AG04449 (cell line): ENCODE measurements at regions of chr15 and their contacts with region 1.

Region 1: DNA sequence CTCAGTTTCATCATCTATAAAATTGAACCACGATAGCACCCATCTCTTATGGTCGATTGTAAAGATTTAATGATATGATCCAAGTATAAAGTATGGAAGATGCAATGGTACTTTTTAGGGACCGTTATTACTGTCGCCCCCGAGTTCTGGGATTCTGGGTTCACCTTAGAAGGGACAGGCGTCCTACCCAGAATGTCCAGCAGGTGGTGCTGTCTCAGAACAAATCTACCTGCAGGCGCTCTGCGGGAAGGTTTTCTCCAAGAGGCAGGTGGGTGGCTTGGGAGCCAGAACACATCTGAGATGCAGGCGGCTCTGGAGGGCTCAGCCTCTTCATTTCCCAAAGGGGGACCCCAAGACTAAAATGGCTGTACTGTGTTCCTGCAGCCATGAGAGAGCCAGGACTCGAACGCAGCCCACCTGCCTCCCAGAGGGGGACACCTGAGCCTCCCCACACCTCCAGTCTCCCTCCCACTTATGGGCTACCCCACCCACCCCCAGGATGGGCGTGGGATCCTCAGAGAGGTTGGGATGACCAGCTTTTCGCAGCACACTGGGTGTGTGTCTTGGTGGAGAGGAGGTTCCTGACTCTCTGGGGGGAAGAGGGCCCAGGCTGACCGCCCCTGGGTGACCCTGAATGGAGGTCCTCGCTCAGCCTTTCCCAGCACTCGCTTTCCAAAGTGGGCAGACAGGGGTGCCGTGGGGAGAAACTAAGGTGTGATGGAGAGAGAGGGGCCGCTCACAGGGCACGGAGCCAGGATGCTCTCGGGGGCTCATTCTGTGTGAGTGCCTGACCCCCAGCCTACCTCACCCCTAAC is 28.1 kb upstream of the CORO2B start:
- DNase-seq: no peak
- H3K4me3 ChIP-seq: no peak overlapping the region
- CTCF ChIP-seq: peak; percentile 80

Region 2: GRCh38 chr15:68304589-68305337 is 245.9 kb before region 1 on chr15:
- CTCF ChIA-PET with region 1: interaction called, 68 read pairs
- POLR2A ChIA-PET with region 1: no interaction called
- DNase-seq: no peak
- H3K4me3 ChIP-seq: no peak overlapping the region
- CTCF ChIP-seq: no peak

Region 3: DNA sequence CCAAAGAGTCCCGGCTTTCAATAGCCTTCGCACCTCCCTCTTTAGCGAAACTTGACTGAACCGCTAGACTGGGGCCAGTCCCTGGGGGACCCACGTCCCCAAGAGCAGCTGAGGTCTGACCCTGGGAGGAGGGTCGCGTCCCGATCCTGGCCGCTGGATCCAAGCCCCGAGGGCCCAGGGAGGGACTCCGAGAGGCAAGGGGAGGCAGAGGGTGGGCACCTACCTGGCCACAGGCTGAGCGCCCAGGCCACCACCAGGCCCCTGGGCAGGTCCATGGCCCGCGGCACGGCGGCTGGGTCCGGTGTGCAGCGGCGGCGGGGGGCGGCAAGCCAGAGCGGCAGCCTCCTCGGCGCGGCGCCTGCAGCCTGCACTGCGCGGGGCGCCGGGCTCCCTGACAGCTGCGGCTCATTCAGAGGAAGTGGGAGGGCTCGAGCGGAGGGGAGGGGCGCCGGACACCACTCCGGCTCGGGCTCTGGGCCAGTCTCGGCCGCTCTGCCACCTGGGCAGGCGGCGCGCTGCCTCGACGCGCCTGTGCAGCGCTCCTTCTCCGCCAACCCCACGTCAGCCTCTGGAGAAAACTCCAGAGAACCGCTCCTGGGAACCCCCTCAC is 118.8 kb before region 1 on chr15 and contains the start of gene ITGA11:
- CTCF ChIA-PET with region 1: interaction called, 78 read pairs
- POLR2A ChIA-PET with region 1: interaction called, 3 read pairs
- DNase-seq: no peak
- H3K4me3 ChIP-seq: peak within 1 kb of the TSS; percentile 96
- CTCF ChIP-seq: no peak

Region 4: GRCh38 chr15:68578174-68578979 is 27.7 kb after region 1 on chr15:
- CTCF ChIA-PET with region 1: interaction called, 10 read pairs
- POLR2A ChIA-PET with region 1: no interaction called
- DNase-seq: no peak
- H3K4me3 ChIP-seq: peak overlapping the region; percentile 58
- CTCF ChIP-seq: peak; percentile 66

Region 5: GRCh38 chr15:68679961-68680371 is 129.3 kb after region 1 on chr15:
- CTCF ChIA-PET with region 1: interaction called, 388 read pairs
- POLR2A ChIA-PET with region 1: no interaction called
- DNase-seq: no peak
- H3K4me3 ChIP-seq: no peak overlapping the region
- CTCF ChIP-seq: no peak

Region 6: GRCh38 chr15:68924866-68925560 is 374.3 kb after region 1 on chr15:
- CTCF ChIA-PET with region 1: interaction called, 64 read pairs
- POLR2A ChIA-PET with region 1: no interaction called
- DNase-seq: peak; percentile 10
- H3K4me3 ChIP-seq: no peak overlapping the region
- CTCF ChIP-seq: peak; percentile 88